PC-9 (cell line): ENCODE measurements at regions of chr22 and their contacts with region 1.

Region 1: DNA sequence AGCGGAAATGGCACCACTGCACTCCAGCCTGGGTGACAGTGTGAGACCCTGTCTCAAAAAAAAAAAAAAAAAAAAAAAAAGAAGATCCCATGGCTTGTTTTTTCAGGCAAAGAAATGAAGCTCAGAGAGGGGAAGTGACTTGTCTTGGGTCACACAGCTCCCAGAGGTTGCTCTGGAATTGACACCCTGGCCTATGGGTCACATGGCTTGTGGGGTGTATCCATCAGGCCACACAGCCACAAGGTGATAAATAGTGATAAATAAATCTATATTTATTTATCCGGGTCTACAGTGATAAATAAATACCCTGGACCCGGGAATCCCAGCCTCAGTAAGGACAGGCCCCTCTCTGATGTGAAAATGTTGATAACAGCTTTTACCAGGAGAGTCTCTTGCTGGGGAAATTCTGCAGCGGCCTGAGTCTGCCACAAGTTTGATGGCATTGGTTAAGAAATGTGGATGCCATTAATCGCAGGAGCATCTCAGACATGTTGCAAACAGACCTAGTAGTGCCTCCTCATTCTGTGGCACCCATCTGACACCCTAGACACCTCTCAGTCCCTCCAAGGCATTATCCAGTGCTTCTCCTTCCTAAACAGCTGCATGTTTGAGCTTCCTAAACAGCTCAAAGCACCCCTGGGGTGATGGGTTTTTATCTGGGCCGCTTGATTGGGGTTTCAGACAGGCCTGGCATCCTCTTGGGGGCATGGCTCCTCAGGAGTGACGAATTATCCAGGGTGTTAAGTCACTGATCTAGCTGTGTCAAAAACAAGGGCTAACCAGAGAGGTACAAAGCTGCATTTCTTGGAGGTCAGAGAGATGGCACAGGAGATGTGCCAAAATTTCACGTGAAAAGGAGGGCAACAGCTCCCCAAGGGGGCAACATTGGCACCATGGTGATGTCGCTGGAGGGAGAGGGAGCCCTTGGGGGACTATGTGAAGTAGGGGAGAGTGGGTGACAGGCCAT is 1.9 kb upstream of the EMID1 start:
- DNase-seq: no peak
- H3K4me3 ChIP-seq: no peak overlapping the region
- H3K27ac ChIP-seq: no peak overlapping the region
- H3K4me1 ChIP-seq: no peaks in the 10 kb centered on the region
- H3K27me3 ChIP-seq: peaks cover 40% of the 10 kb centered on the region
- CTCF ChIP-seq: no peak

Region 2: DNA sequence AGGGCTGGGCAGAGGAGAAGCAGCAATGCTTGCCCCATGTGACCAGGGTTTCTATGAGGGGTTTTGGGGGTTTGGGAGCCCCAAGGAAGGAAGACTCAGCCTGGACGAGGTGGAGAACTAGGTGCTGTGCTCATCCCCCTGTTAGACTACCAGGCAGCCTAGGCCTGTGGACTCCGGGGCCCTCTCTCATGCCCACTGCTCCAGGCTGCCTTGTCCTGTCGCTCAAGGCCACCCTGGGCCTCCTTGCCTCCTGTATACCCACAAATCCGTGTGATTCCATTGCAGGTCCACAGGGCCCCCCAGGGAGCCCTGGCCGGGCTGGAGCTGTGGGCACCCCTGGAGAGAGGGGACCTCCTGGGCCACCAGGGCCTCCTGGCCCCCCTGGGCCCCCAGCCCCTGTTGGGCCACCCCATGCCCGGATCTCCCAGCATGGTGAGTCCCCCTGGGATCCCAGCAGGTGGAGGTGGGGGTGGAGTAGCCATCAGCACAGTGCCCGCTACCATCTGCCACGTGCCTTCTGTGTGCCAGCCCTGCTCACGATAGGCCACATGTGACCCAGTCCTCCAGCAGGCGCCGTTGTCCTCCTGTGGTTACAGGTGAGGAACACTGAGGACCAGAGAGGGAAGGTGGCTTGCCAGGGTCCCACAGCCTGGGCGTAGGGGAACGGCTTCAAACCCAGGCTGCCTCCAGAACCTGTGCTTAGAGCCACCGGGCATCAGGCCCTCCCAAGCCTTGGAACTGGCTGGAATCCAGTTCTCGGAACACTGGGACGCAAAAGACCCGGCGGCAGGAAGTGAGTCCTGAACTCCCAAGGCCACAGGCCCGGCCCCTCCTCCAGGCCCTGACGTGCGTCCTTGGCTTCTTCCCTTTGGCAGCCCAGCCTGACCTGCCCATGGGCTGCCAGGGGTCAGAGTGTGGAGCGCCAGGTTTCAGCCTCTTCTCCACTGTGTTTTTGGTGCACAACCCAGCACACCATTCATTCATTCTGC is 28.5 kb after region 1 on chr22:
- CTCF ChIA-PET with region 1: interaction called, 13 read pairs
- POLR2A ChIA-PET with region 1: no interaction called
- intact Hi-C with region 1: no loop called
- DNase-seq: no peak
- H3K4me3 ChIP-seq: no peak overlapping the region
- H3K27ac ChIP-seq: no peak overlapping the region
- H3K4me1 ChIP-seq: no peaks in the 10 kb centered on the region
- H3K27me3 ChIP-seq: no peaks in the 10 kb centered on the region
- CTCF ChIP-seq: no peak